Right ventricle myocardium superior (tissue), 1 donor: ENCODE measurements at regions of chr9 and their contacts with region 1.

Region 1: DNA sequence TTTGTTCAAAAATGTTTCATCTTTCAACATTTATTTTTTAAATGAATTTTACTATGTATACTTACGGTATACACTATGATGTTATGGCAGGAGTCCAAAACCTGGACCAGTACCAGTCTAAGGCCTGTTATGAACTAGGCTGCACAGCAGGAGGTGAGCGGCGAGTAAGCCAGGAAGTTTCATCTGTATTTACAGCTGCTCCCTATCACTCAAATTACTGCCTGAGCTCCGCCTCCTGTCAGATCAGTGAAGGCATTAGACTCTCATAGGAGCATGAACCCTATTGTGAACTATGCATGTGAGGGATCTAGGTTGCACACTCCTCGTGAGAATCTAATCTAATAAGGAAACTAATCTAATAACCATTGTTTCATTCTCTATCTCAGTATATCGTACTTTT is 715.5 kb upstream of the PTPRD start:
- DNase-seq: no peak
- ATAC-seq: no peak

Region 2: GRCh38 chr9:10045598-10045997 is 1282.7 kb before region 1 on chr9:
- intact Hi-C with region 1: loop called (anchors 10 kb)
- DNase-seq: no peak
- ATAC-seq: no peak

Region 3: GRCh38 chr9:11431490-11431889 is 103.2 kb after region 1 on chr9:
- intact Hi-C with region 1: no loop called
- DNase-seq: no peak
- ATAC-seq: no peak

Region 4: GRCh38 chr9:11618241-11618805 is 290.0 kb after region 1 on chr9:
- intact Hi-C with region 1: no loop called
- DNase-seq: no peak
- ATAC-seq: no peak